ENCODE measurements at regions of chr2 and their contacts with region 1.

Region 1: DNA sequence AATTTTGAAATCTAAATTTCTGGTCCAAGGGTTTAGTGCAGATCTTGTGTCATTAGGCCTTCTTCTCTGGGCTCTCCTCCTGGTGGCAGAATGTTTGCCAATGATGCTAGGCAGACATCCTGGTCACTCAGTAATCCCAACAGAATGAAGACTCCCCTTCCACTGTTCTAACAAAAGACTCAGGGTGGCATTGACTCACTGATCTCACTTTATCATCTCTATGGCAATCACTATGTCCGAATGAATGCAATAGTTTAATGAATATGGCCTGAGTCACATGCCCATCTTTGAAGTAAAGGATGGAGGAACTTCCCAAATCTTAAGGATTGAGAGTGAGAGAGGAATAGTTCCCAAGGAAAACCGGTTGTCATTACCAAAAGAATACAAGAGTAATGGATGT is 261.1 kb downstream of the KCNE4 start:
- DNase-seq: no peak
- H3K4me3 Mint-ChIP-seq: no peak overlapping the region
- H3K27ac Mint-ChIP-seq: no peak overlapping the region
- H3K4me1 Mint-ChIP-seq: no peaks in the 10 kb centered on the region
- H3K27me3 Mint-ChIP-seq: no peaks in the 10 kb centered on the region

Region 2: GRCh38 chr2:223283771-223284170 is 29.3 kb before region 1 on chr2:
- intact Hi-C with region 1: loop called (anchors 1 kb)
- DNase-seq: no peak
- H3K4me3 Mint-ChIP-seq: no peak overlapping the region
- H3K27ac Mint-ChIP-seq: no peak overlapping the region
- H3K4me1 Mint-ChIP-seq: no peaks in the 10 kb centered on the region
- H3K27me3 Mint-ChIP-seq: no peaks in the 10 kb centered on the region